HepG2 (cell line): ENCODE measurements at regions of chr1 and their contacts with region 1.

Region 1: GRCh38 chr1:108963052-108963686 is at the start of gene CLCC1:
- DNase-seq: peak; percentile 83
- ATAC-seq: peak; percentile 95
- H3K4me3 ChIP-seq: peak within 1 kb of the TSS; percentile 75 to 88 (median 87)
- H3K27ac ChIP-seq: peak within 1 kb of the TSS; percentile 92
- H3K4me1 ChIP-seq: peaks cover 52% of the 10 kb centered on the region
- H3K27me3 ChIP-seq: no peaks in the 10 kb centered on the region; a peak in 1 of 5 replicates
- CTCF ChIP-seq: no peak
- EP300 ChIP-seq: no peak
- POLR2A ChIP-seq: peak; percentile 86 to 95
- RAD21 ChIP-seq: peak; percentile 71
- total RNA-seq, gene CLCC1: 14.1 and 25.8 TPM in 2 replicates

Region 2: DNA sequence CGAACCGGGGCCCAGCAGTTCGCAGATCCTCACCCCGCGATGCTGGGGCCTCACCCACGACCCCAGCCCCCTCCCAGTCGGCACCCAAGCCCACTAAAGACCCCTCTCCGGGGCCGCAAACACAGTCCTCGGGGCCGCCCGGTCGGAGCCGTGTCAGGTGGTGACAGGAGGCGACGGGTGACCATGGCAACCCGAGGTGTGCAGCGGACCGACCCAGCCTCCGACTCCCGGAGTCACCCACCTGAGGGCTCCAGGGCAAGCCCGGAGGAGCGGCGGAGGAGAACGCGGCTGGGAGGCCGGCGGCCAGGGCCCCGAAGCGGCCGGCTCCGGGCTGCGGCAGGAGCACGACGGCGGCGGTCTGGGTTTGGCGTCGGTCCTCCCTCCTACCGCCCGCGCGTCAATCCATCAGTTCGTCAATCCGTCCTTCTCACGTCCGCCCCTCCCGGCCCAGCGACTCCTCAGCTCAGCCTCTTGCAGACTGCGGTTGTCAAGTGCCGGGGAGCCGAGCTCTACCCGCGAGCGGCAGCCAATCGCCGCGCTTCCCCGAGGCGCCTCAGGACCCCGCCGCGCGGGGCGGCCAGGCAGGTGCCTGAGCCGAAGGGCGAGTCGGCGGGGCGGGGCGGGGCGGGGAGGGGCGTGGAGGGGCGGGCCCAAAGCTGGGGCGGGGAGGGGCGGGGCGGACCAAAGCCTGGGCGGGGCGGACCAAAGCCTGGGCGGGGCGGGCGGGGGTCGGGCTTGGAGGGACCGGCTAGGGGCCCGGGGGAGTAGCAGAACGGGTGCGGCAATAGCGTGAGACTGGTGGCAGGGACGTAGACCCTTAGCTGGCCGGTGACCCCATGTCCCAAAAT is 78.7 kb after region 1 on chr1 and contains the start of gene WDR47:
- CTCF ChIA-PET with region 1: no interaction called
- POLR2A ChIA-PET with region 1: interaction called, 5 read pairs
- in situ Hi-C with region 1: no loop called
- intact Hi-C with region 1: loop called (anchors 2 kb)
- DNase-seq: peak; percentile 84
- ATAC-seq: peak; percentile 96
- H3K4me3 ChIP-seq: peak within 1 kb of the TSS; percentile 94 to 96 (median 95)
- H3K27ac ChIP-seq: peak within 1 kb of the TSS; percentile 58
- H3K4me1 ChIP-seq: peaks cover 20% of the 10 kb centered on the region
- H3K27me3 ChIP-seq: no peaks in the 10 kb centered on the region; a peak in 1 of 5 replicates
- CTCF ChIP-seq: no peak
- EP300 ChIP-seq: no peak
- POLR2A ChIP-seq: peak; percentile 94 to 98
- RAD21 ChIP-seq: peak; percentile 61
- total RNA-seq, gene WDR47: 5.9 and 6.0 TPM in 2 replicates